ENCODE measurements at regions of chrX and their contacts with region 1.

Region 1: GRCh38 chrX:138711399-138712347 is at the start of gene FGF13:
- DNase-seq: peak in 4 of 5 donors; percentile 6 to 31 (median 22)
- ATAC-seq: peak in 3 of 4 donors; percentile 62 to 66 (median 65)
- H3K4me3 ChIP-seq: peak within 1 kb of the TSS in 11 of 12 donors; percentile 19 to 58 (median 47)
- H3K27ac ChIP-seq: peak within 1 kb of the TSS in 1 of 12 donors; percentile 47
- H3K4me1 ChIP-seq: no peaks in the 10 kb centered on the region
- H3K27me3 ChIP-seq: peaks cover 0 to 62% (median 0%) of the 10 kb centered on the region in 9 donors
- CTCF ChIP-seq: peak in 5 of 12 donors; percentile 19 to 43 (median 27)
- POLR2A ChIP-seq: no peak
- total RNA-seq, gene FGF13: 0.44 to 3.3 (median 1.5) TPM

Region 2: DNA sequence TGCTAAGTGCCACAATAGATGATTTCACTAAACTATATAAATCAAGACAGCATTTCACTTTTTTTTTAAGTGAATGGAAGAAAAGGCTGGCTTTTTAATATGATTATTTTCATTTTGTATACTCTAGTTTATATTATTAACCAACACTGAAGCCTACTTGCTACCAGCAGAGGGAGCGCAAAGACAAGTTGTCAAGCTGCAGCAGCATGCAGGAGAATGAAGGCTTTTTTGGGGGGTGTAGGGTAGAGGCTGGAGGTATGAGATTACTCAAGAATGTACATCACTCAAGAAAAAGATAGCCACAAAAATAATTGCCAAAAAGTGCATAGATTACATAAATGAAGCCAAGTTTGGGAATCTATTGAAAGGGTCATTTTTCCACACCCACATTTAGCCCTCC is 519.7 kb before region 1 on chrX:
- intact Hi-C with region 1: loop called in 1 of 10 experiments (anchors 10 kb)
- DNase-seq: peak in 1 of 5 donors; percentile 21
- ATAC-seq: no peak
- H3K4me3 ChIP-seq: no peak overlapping the region
- H3K27ac ChIP-seq: no peak overlapping the region
- H3K4me1 ChIP-seq: no peaks in the 10 kb centered on the region
- H3K27me3 ChIP-seq: peaks cover 0 to 7% (median 0%) of the 10 kb centered on the region in 9 donors
- CTCF ChIP-seq: peak in 10 of 12 donors; percentile 10 to 47 (median 31)
- POLR2A ChIP-seq: no peak

Region 3: GRCh38 chrX:138745196-138745595 is 33.5 kb after region 1 on chrX:
- intact Hi-C with region 1: no loop called
- DNase-seq: no peak
- ATAC-seq: peak in 1 of 4 donors; percentile 61
- H3K4me3 ChIP-seq: no peak overlapping the region
- H3K27ac ChIP-seq: no peak overlapping the region
- H3K4me1 ChIP-seq: no peaks in the 10 kb centered on the region
- H3K27me3 ChIP-seq: peaks cover 0 to 37% (median 0%) of the 10 kb centered on the region in 9 donors
- CTCF ChIP-seq: peak; percentile 45 to 82 (median 63)
- POLR2A ChIP-seq: no peak

Region 4: DNA sequence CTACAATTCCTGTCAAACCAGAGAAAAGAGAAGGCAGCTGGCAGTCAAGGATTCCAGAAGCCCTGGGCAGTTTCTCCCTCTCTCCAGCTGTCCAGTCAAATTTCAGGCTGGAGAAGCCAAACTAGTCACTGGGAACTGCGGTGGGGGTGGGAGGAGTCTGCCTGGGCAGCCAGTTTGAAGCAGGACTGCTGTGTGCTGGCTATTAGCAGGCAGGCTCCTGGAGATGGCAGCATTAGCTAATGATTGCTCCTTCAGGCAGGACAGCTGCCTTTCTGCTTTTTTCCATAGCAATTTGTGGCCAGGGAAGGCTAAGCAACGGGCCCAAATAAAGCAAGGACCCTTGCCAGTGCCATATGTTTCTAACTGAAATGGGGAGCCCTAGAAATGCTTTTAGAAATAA is 44.6 kb after region 1 on chrX:
- intact Hi-C with region 1: no loop called
- DNase-seq: peak in 4 of 5 donors; percentile 5 to 26 (median 19)
- ATAC-seq: peak in 3 of 4 donors; percentile 64 to 77 (median 76)
- H3K4me3 ChIP-seq: no peak overlapping the region
- H3K27ac ChIP-seq: no peak overlapping the region
- H3K4me1 ChIP-seq: no peaks in the 10 kb centered on the region
- H3K27me3 ChIP-seq: peaks cover 0 to 17% (median 0%) of the 10 kb centered on the region in 9 donors
- CTCF ChIP-seq: peak in 6 of 12 donors; percentile 13 to 40 (median 24)
- POLR2A ChIP-seq: no peak

Region 5: GRCh38 chrX:138877746-138878145 is 166.1 kb after region 1 on chrX:
- intact Hi-C with region 1: no loop called
- DNase-seq: no peak
- ATAC-seq: no peak
- H3K4me3 ChIP-seq: no peak overlapping the region
- H3K27ac ChIP-seq: no peak overlapping the region
- H3K4me1 ChIP-seq: no peaks in the 10 kb centered on the region
- H3K27me3 ChIP-seq: peaks cover 0 to 4% (median 0%) of the 10 kb centered on the region in 9 donors
- CTCF ChIP-seq: no peak
- POLR2A ChIP-seq: no peak

Region 6: DNA sequence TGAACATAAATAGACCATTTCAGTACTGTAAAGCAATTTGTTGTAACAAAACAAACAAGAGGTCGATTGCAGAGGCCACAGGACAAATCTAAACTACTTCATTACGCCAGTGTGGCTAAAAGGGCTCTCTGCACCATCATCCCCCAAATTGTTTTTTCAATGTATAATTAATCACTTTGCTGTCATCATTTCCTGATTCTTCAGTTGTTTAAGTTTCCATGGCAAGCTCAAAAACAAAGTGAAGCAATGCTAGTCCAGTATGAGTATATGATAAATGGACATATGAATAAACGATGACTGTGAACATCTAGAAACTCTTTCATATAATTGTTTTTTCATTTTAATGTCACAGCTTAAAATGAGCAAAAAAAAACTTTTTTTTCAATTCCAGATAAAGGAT is 235.3 kb after region 1 on chrX:
- intact Hi-C with region 1: no loop called
- DNase-seq: no peak
- ATAC-seq: no peak
- H3K4me3 ChIP-seq: no peak overlapping the region
- H3K27ac ChIP-seq: no peak overlapping the region
- H3K4me1 ChIP-seq: no peaks in the 10 kb centered on the region
- H3K27me3 ChIP-seq: no peaks in the 10 kb centered on the region
- CTCF ChIP-seq: no peak
- POLR2A ChIP-seq: no peak

Measured in heart left ventricle (tissue), 16 donors.